Endothelial cell of umbilical vein (primary cell): ENCODE measurements at regions of chr1 and their contacts with region 1.

Region 1: GRCh38 chr1:168082008-168082876 is 54.5 kb downstream of the GPR161 start:
- DNase-seq: peak; percentile 81
- H3K4me3 ChIP-seq: no peak overlapping the region
- H3K27ac ChIP-seq: peak overlapping the region; percentile 23
- H3K4me1 ChIP-seq: peaks cover 5% of the 10 kb centered on the region
- H3K27me3 ChIP-seq: no peaks in the 10 kb centered on the region
- CTCF ChIP-seq: peak; percentile 94 to 96
- POLR2A ChIP-seq: no peak

Region 2: DNA sequence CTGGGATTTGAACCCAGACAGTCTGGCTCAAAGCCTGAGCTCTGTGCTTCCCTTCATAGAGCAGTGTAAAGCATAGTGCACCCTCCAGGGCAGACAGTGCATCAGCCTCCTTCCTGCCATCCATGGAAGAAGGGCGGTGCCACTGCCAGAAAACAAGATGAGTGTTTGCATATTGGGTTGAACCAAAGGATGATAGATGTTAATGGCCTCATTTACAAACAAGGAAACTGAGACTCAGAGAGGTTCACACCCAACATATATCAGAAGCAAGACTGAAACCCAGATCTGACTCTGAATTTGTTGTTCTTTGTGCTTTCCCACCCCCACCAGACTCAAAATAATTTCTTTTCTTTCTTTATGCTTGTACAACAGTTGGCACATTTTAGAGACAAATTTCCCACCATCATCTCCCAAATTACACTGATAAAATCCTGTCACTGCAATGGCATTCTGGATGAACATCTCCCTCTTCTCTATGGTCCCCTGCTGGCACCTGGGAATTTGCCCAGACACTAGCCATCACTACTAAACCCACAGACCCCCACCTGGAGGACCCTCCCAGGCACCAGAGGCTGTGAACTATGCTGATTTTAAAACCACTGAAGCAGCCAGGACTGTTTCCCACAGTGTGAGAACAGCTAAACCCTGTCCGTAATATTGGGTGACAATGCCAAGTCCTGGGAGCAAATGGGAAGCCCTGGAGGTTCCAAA is 405.9 kb before region 1 on chr1:
- CTCF ChIA-PET with region 1: no interaction called
- POLR2A ChIA-PET with region 1: no interaction called
- dilution Hi-C with region 1: no loop called
- intact Hi-C with region 1: no loop called
- DNase-seq: no peak
- H3K4me3 ChIP-seq: no peak overlapping the region
- H3K27ac ChIP-seq: no peak overlapping the region
- H3K4me1 ChIP-seq: no peaks in the 10 kb centered on the region
- H3K27me3 ChIP-seq: peaks cover 8 to 9% of the 10 kb centered on the region in 2 experiments
- CTCF ChIP-seq: no peak
- POLR2A ChIP-seq: no peak

Region 3: GRCh38 chr1:167715157-167715999 is 366.9 kb before region 1 on chr1:
- CTCF ChIA-PET with region 1: interaction called, 29 read pairs
- POLR2A ChIA-PET with region 1: no interaction called
- dilution Hi-C with region 1: no loop called
- intact Hi-C with region 1: loop called (anchors 1 kb)
- DNase-seq: peak; percentile 93
- H3K4me3 ChIP-seq: peak overlapping the region; percentile 89 to 99 (median 96)
- H3K27ac ChIP-seq: peak overlapping the region; percentile 61
- H3K4me1 ChIP-seq: peaks cover 10% of the 10 kb centered on the region
- H3K27me3 ChIP-seq: peaks cover 3 to 4% of the 10 kb centered on the region in 2 experiments
- CTCF ChIP-seq: peak; percentile 80 to 86
- POLR2A ChIP-seq: no peak

Region 4: GRCh38 chr1:167797015-167797414 is 285.2 kb before region 1 on chr1:
- CTCF ChIA-PET with region 1: interaction called, 17 read pairs
- POLR2A ChIA-PET with region 1: no interaction called
- dilution Hi-C with region 1: no loop called
- intact Hi-C with region 1: no loop called
- DNase-seq: peak; percentile 70
- H3K4me3 ChIP-seq: no peak overlapping the region
- H3K27ac ChIP-seq: no peak overlapping the region
- H3K4me1 ChIP-seq: peaks cover 12% of the 10 kb centered on the region
- H3K27me3 ChIP-seq: no peaks in the 10 kb centered on the region
- CTCF ChIP-seq: no peak
- POLR2A ChIP-seq: no peak

Region 5: GRCh38 chr1:167904652-167905130 is 177.6 kb before region 1 on chr1:
- CTCF ChIA-PET with region 1: interaction called, 11 read pairs
- POLR2A ChIA-PET with region 1: no interaction called
- dilution Hi-C with region 1: no loop called
- intact Hi-C with region 1: no loop called
- DNase-seq: peak; percentile 59
- H3K4me3 ChIP-seq: no peak overlapping the region
- H3K27ac ChIP-seq: no peak overlapping the region
- H3K4me1 ChIP-seq: peaks cover 7% of the 10 kb centered on the region
- H3K27me3 ChIP-seq: no peaks in the 10 kb centered on the region
- CTCF ChIP-seq: no peak
- POLR2A ChIP-seq: no peak

Region 6: DNA sequence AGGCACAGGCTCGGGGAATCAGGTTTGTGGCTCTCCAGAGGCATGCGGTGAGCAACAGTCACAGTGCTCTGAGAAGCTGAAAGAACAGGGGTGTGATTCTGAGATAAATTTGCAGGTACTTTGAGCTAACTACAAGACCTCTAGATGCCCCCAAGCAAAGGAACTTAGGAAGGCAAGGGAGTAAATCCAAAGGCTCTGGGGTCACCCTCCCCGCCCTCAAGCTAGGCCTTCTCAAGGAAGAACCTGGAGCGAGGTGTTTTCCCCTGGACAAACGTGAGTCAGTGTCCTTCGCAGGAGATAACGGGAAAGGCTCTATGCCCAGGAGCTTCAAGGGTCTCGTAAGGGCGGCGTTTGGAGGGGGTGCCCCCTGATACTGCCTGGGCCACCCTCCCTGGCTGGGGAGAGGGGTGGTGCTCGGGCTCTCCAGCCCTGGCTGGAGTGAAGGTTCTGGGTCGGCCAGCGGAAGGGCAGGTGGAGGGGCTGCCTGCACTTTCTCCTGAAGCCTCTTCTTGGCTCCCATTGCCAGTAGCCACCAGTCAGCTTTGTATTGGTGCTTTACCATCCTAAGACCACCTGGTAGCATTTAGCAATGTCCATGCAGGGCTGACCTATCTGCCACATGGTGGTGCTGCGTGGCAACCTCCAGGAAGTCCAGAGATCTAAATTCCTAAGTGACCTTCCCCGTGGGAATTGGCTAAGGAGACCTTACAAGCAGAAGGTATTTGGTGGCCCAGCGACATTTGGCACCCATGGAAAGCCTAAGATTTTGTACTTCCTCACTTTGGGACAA is 10.5 kb after region 1 on chr1:
- CTCF ChIA-PET with region 1: interaction called, 22 read pairs
- POLR2A ChIA-PET with region 1: no interaction called
- dilution Hi-C with region 1: no loop called
- intact Hi-C with region 1: no loop called
- DNase-seq: no peak
- H3K4me3 ChIP-seq: no peak overlapping the region
- H3K27ac ChIP-seq: no peak overlapping the region
- H3K4me1 ChIP-seq: no peaks in the 10 kb centered on the region
- H3K27me3 ChIP-seq: no peaks in the 10 kb centered on the region
- CTCF ChIP-seq: no peak
- POLR2A ChIP-seq: no peak

Region 7: DNA sequence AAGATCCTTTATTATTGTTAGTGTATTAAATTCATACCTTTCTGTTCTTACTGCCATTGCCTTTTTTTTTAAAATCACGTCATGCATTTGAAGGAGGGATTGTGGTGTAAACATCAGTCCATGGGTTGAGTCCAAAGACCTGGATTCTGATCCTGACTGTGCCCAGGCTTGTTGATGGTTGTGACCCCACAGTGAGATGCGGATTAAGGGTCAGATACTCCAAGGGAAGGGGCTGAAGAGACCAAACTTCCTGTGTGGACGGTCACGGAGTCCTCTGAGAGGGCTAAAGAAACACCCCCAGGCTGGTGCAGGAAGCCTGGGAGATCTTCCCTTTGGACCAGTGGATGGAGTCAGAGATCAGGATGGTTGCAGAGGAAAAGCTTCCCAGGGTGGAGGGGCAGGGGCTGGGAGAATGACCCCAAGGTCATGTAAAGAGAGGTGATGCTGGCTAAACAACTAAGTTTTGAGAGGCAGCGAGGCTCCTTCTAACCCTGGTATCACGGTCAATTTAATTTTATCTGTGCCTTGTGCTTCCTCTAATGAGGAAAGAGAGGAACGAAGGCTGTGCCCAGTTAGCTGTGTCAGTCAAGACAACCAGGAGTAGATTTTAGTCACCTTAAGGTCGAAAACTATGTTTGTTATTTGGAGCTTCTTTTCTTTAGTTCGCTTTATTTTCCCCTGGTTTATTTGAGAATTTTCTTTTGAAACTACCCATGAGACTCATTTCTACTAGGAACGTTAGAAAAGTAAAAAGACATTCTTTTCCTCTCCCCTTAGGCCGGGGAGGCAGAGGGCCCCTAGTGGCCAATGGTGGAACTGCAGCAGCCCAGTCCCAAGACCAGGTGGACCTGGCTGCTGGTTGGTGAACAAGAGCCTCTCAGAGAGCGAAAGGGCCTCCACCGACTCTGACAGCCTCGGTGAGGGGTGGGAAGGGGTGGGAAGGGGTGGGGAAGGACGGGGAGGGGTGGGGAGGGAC is 63.2 kb after region 1 on chr1:
- CTCF ChIA-PET with region 1: interaction called, 10 read pairs
- POLR2A ChIA-PET with region 1: no interaction called
- dilution Hi-C with region 1: no loop called
- intact Hi-C with region 1: no loop called
- DNase-seq: peak; percentile 83
- H3K4me3 ChIP-seq: no peak overlapping the region
- H3K27ac ChIP-seq: no peak overlapping the region
- H3K4me1 ChIP-seq: no peaks in the 10 kb centered on the region
- H3K27me3 ChIP-seq: peaks cover 0 to 5% of the 10 kb centered on the region in 2 experiments
- CTCF ChIP-seq: peak; percentile 92 to 97
- POLR2A ChIP-seq: no peak